ENCODE measurements at regions of chr1 and their contacts with region 1.

Region 1: GRCh38 chr1:100459358-100460114 is 78.4 kb upstream of the GPR88 start:
- DNase-seq: peak; percentile 84
- H3K4me3 ChIP-seq: no peak overlapping the region
- H3K27ac ChIP-seq: no peak overlapping the region
- H3K4me1 ChIP-seq: no peaks in the 10 kb centered on the region
- H3K27me3 ChIP-seq: no peaks in the 10 kb centered on the region

Region 2: DNA sequence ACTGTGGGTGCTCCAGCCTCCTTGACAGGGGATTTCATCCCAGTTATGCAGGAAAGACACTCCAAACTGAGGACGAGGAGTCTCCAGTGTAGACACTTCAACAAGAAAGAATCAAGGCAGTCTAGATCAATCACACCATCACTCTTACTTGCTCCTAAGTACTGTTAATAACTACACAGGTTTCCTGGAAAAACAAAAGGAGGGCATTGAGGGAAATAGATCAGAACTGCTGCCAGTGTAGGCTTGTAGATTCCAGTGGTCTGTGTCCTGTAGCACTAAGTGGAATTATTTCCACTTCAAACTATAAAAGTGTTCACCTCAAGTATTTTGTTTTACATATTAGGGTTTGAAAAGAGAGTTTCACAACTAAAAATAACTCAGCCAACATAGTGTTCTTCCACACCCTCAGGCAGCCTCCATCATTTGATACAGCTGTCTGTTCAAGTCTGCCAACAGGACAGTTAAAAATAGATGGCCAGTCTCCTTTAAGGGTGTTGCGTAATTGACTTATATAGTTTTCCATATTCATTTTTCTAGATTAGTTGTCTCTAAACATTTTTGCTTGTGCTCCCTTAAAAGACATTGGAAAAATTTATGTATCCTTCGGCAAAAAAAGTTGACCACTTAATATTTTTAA is 641.4 kb before region 1 on chr1:
- in situ Hi-C with region 1: loop called (anchors 10 kb)
- DNase-seq: peak; percentile 16
- H3K4me3 ChIP-seq: no peak overlapping the region
- H3K27ac ChIP-seq: no peak overlapping the region
- H3K4me1 ChIP-seq: no peaks in the 10 kb centered on the region
- H3K27me3 ChIP-seq: no peaks in the 10 kb centered on the region

Region 3: DNA sequence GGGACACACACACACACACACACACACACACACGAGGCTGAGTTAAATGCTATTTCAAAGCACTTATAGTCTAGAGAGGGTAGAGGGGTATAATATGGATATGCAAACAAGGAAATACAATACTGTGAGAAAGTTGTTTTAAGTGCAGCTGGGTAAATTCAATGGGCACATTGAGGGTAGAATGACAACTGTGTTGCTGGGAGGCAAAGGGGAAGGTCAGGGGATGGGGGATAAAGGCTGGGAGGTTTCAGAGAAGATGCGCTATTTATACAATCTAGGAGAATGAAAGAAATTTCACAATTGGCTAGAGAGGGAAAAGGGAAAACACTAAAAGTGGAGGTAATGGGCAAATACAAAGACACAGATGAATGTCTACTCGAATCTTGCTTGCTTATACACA is 415.7 kb after region 1 on chr1:
- in situ Hi-C with region 1: loop called (anchors 5 kb)
- DNase-seq: no peak
- H3K4me3 ChIP-seq: no peak overlapping the region
- H3K27ac ChIP-seq: no peak overlapping the region
- H3K4me1 ChIP-seq: no peaks in the 10 kb centered on the region
- H3K27me3 ChIP-seq: no peaks in the 10 kb centered on the region

Region 4: GRCh38 chr1:101846820-101847219 is 1387.3 kb after region 1 on chr1:
- in situ Hi-C with region 1: no loop called
- DNase-seq: no peak
- H3K4me3 ChIP-seq: no peak overlapping the region
- H3K27ac ChIP-seq: no peak overlapping the region
- H3K4me1 ChIP-seq: no peaks in the 10 kb centered on the region
- H3K27me3 ChIP-seq: no peaks in the 10 kb centered on the region

Measured in GM23248 (cell line).